ENCODE measurements at regions of chr12 and their contacts with region 1.

Region 1: DNA sequence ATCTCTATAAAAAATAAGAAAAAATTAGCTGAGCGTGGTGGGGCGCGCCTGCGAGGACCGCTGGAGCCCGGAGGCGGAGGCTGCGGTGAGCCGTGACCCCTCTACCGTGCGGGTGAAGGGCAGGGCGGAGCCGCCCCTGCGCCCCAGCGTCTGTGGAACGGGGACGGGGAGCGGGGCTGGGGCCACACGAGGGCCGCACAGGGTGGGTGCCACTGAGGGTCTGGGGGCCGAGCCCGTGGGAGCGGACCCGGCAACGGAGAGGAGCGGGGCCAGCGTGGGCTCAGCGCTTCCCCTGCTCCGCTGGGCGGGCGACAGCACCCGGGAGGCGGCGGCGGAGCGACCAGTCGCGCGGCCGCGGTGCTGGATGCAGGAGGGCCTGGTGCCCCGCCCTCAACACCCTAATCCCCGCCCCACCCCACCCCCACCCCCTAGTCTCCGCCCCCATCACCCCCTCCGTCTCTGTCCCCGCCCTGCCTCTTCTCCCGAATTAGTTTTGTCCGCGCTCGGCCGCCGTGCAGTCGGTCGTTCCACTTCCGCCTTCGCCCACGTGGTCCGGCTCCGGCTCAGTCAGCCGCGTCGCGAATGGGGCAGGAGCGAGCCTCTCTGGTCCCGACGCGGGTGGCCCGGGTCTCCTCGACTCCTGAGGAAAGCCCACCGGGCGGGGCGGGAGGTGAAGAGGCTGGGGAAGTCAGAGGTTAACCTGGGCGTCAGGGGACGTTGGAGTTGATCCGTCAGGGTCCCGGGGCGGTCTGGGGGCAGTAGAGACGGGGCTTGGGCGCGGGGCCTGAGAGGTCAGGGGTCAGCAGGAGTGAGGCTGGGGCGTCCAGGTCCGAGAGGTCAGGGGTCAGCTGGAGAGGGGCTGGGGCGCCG is at the start of gene PUS1:
- DNase-seq: peak; percentile 88
- ATAC-seq: peak; percentile 82
- H3K4me3 Mint-ChIP-seq: peak within 1 kb of the TSS; percentile 94
- H3K27ac Mint-ChIP-seq: peak within 1 kb of the TSS; percentile 90
- H3K4me1 Mint-ChIP-seq: peaks cover 36% of the 10 kb centered on the region
- H3K27me3 Mint-ChIP-seq: no peaks in the 10 kb centered on the region
- CTCF ChIP-seq: no peak
- total RNA-seq, gene PUS1: 51.5 and 60.3 TPM in 2 replicates

Region 2: DNA sequence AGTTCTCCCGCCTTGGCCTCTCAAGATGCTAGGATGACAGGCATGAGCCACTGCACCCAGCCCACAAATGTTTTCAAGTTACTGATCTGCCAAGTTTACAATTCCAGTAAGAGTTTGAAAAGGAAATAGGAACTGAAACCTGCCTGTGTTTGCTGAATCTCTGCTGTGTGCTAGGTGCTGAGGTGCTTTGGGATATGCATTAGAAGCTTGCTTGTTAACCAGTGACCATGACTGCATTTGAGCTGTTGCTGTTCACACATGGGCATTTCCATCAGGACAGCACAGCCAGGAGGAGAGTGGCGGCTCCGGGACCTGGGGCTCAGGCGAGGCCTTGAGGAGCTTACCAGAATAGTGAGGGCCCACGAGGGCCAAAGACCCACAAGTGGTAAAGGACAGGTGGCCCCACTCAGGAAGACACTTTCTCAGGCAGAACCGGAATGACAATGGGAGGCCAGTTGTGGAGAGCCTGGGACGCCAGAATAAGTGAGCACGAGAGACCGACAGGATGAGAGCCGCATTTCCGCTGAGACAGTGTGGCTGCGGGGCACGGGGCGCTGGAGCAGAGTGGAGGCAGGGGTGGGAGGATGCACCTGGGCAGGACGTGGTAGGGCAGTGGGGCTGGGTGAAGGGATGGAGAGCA is 155.2 kb before region 1 on chr12:
- CTCF ChIA-PET with region 1: no interaction called
- POLR2A ChIA-PET with region 1: interaction called, 9 read pairs
- intact Hi-C with region 1: loop called (anchors 10 kb)
- DNase-seq: peak; percentile 49
- ATAC-seq: peak; percentile 72
- H3K4me3 Mint-ChIP-seq: peak overlapping the region; percentile 84
- H3K27ac Mint-ChIP-seq: peak overlapping the region; percentile 98
- H3K4me1 Mint-ChIP-seq: peaks cover 76% of the 10 kb centered on the region
- H3K27me3 Mint-ChIP-seq: no peaks in the 10 kb centered on the region
- CTCF ChIP-seq: no peak

Region 3: DNA sequence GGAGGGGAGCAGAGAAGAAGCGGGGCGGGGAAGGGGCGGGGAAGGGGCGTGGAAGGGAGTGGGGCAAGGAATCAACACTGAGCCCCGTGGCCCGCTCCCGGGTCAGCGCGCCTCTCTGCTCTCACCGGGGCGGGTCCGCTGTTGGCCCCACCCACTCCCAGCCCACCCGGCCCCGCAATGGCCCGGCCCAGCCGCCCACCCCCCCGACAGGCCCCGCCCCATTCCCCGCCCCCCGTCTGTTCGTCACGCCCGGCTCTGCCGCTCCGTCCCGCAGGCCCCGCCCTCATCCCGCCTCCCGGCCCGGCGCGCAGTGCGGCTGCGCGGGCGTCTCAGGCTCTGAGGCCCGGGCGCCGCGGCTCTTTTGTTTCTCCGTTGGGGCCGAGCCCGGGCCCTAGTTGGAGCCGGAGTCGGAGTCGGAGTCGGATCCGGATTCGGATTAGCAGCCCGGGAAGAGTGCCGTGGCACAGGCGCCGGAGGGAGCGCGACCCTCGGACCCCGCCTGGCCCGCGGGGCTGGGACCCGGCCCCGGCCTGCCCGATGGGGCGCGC is 34.6 kb before region 1 on chr12 and contains the start of gene ULK1:
- CTCF ChIA-PET with region 1: no interaction called
- POLR2A ChIA-PET with region 1: interaction called, 14 read pairs
- intact Hi-C with region 1: loop called (anchors 1 kb)
- DNase-seq: peak; percentile 97
- ATAC-seq: peak; percentile 86
- H3K4me3 Mint-ChIP-seq: peak within 1 kb of the TSS; percentile 82
- H3K27ac Mint-ChIP-seq: peak within 1 kb of the TSS; percentile 46
- H3K4me1 Mint-ChIP-seq: peaks cover 22% of the 10 kb centered on the region
- H3K27me3 Mint-ChIP-seq: peaks cover 3% of the 10 kb centered on the region
- CTCF ChIP-seq: no peak
- total RNA-seq, gene ULK1: 20.1 and 27.0 TPM in 2 replicates

Region 4: GRCh38 chr12:132071040-132071810 is 142.3 kb after region 1 on chr12:
- CTCF ChIA-PET with region 1: no interaction called
- POLR2A ChIA-PET with region 1: no interaction called
- intact Hi-C with region 1: loop called (anchors 10 kb)
- DNase-seq: peak; percentile 35
- ATAC-seq: peak; percentile 75
- H3K4me3 Mint-ChIP-seq: peak overlapping the region; percentile 66
- H3K27ac Mint-ChIP-seq: peak overlapping the region; percentile 90
- H3K4me1 Mint-ChIP-seq: peaks cover 81% of the 10 kb centered on the region
- H3K27me3 Mint-ChIP-seq: no peaks in the 10 kb centered on the region
- CTCF ChIP-seq: no peak

Measured in activated B cell treated with CpG ODN at 0.5 μM for 24 hours (primary cell).